ENCODE measurements at regions of chr3 and their contacts with region 1.

Region 1: GRCh38 chr3:113051302-113051711 is 60.5 kb downstream of the GTPBP8 start:
- DNase-seq: peak; percentile 88

Region 2: DNA sequence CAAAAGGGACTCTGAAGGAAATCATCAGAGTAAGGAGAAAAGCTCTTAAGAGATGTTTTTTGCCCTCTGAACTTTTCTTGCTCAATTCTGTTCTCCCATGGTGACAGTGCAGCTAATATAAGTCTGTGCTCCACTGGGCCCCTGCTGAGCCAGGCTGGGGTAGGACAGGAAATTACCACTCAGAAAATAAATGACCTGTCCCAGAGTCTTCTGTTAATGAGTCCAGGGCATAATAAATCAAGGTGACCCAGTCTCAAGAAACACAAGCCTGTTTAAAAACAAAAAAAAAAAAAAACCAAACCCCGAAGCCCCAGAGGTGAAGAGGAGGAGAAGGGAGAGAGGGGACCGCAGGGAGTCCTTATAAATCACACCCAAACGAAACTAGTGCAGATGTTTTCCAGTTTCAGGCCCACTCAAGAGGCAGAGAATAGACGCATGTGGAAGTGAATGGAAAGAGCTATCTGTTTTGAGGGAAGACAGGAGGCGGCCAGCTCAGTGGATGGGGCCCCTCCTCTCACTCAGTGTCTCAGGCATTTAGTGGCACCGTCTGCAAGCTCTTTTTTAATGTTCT is 100.2 kb after region 1 on chr3:
- intact Hi-C with region 1: loop called (anchors 5 kb)
- DNase-seq: no peak

Region 3: GRCh38 chr3:113287803-113288648 is 236.7 kb after region 1 on chr3:
- intact Hi-C with region 1: loop called (anchors 1 kb)
- DNase-seq: no peak

Region 4: GRCh38 chr3:113626503-113627371 is 575.4 kb after region 1 on chr3:
- intact Hi-C with region 1: loop called (anchors 10 kb)
- DNase-seq: no peak

Measured in cardiac septum (tissue), 1 donor.